ENCODE measurements at regions of chr18 and their contacts with region 1.

Region 1: DNA sequence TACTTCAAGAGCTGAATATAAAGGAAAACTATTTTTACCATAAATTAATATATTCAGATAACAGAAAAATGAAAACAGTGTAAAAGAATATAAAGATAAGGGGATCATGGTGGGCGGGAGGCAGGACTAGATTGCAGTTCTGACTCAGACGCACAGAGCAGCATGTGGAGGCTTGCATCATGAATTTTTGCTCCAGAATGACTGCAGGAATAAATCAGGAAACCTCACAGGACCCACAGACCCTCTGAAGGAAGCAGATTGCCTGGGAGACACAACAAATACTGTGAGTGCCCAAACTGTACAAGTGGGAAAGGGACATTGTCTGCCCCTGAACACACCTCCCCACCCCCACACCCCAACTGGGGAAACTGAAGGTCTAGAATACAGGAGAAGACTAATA is 19.2 kb upstream of the SIGLEC15 start:
- DNase-seq: no peak
- ATAC-seq: no peak
- H3K4me3 Mint-ChIP-seq: no peak overlapping the region
- H3K27ac Mint-ChIP-seq: no peak overlapping the region
- H3K4me1 Mint-ChIP-seq: peaks cover 21% of the 10 kb centered on the region
- H3K27me3 Mint-ChIP-seq: no peaks in the 10 kb centered on the region
- CTCF ChIP-seq: no peak

Region 2: DNA sequence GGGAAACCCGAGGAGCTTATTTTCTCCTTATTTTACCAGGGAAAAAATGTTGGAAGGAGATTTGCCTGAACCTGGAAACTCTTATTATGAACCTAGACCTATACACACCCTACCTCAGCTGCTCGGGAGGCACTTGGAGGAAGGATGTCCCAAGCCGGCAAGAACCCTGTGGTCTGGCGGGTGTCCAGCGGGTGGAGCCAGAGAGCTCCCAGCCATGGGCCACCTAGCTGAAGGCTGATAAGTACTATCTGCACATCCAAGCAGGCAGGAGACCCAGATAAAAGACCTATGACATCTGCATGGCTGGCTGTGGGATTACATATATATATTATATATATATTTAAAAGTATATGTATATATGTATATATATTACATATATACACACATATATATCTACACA is 83.3 kb before region 1 on chr18:
- CTCF ChIA-PET with region 1: interaction called, 16 read pairs
- POLR2A ChIA-PET with region 1: no interaction called
- DNase-seq: peak; percentile 91
- ATAC-seq: peak; percentile 99
- H3K4me3 Mint-ChIP-seq: no peak overlapping the region
- H3K27ac Mint-ChIP-seq: no peak overlapping the region
- H3K4me1 Mint-ChIP-seq: peaks cover 20% of the 10 kb centered on the region
- H3K27me3 Mint-ChIP-seq: no peaks in the 10 kb centered on the region; the same call in 1 of the 2 replicates
- CTCF ChIP-seq: peak; percentile 71

Region 3: DNA sequence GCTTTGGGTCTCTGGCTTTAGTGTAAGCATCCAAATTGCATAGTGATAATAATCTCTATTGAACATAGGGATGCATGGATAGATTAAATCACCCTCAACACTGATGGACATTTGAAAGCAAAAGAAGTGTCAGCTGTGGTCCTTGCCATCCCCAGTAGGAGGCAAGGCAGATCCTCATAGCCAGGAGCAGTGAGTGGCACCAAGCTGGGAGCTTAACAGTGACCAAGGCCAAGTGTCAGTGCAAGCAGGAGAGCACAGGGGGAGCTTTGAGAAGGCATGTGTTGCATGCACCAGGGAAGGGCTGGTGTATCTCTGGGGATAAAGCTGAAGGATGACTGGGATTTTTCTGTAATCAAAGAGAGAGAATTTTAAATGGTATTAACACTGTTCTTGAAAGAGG is 67.6 kb before region 1 on chr18:
- CTCF ChIA-PET with region 1: interaction called, 22 read pairs
- POLR2A ChIA-PET with region 1: no interaction called
- DNase-seq: peak; percentile 21
- ATAC-seq: peak; percentile 82
- H3K4me3 Mint-ChIP-seq: no peak overlapping the region
- H3K27ac Mint-ChIP-seq: no peak overlapping the region
- H3K4me1 Mint-ChIP-seq: peaks cover 39% of the 10 kb centered on the region
- H3K27me3 Mint-ChIP-seq: no peaks in the 10 kb centered on the region
- CTCF ChIP-seq: no peak

Region 4: DNA sequence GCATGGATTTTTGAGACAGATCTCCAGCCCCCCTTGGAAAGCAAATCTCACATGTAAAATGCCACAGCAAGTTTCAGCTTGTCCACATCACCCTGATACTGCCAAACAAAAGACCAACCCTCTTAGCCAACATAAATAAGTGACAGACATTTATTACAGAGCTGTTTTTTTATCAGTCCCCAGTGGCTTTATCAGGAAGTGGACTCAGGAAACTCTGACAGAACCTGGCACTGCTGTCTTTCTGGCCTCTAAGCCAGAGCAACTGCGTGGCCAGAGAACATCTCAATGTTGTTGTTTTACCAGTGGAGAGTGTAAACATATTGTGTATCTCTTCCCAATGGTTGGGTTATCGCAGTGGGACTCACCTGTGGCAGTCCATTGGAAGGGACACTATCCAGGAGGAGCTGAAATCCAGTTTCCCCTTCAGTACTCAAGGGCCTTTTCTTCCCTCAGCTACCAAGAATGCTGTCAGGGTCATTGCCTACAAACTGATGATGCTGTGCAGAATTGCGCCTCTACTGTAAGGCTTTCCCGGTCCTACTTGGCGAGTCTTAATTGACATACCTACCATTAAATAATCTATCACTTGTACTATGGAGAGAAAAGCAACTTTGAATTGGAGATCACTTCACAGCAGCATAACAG is 60.3 kb before region 1 on chr18:
- CTCF ChIA-PET with region 1: interaction called, 10 read pairs
- POLR2A ChIA-PET with region 1: no interaction called
- DNase-seq: no peak
- ATAC-seq: no peak
- H3K4me3 Mint-ChIP-seq: no peak overlapping the region
- H3K27ac Mint-ChIP-seq: no peak overlapping the region
- H3K4me1 Mint-ChIP-seq: peaks cover 20% of the 10 kb centered on the region
- H3K27me3 Mint-ChIP-seq: no peaks in the 10 kb centered on the region; the same call in 1 of the 2 replicates
- CTCF ChIP-seq: no peak

Region 5: GRCh38 chr18:45775241-45775676 is 31.0 kb before region 1 on chr18:
- CTCF ChIA-PET with region 1: interaction called, 10 read pairs
- POLR2A ChIA-PET with region 1: no interaction called
- DNase-seq: peak; percentile 62
- ATAC-seq: peak; percentile 92
- H3K4me3 Mint-ChIP-seq: peak overlapping the region; percentile 75
- H3K27ac Mint-ChIP-seq: peak overlapping the region; percentile 41; the same call in 1 of the 2 replicates
- H3K4me1 Mint-ChIP-seq: peaks cover 4% of the 10 kb centered on the region
- H3K27me3 Mint-ChIP-seq: peaks cover 45% of the 10 kb centered on the region
- CTCF ChIP-seq: no peak

Region 6: DNA sequence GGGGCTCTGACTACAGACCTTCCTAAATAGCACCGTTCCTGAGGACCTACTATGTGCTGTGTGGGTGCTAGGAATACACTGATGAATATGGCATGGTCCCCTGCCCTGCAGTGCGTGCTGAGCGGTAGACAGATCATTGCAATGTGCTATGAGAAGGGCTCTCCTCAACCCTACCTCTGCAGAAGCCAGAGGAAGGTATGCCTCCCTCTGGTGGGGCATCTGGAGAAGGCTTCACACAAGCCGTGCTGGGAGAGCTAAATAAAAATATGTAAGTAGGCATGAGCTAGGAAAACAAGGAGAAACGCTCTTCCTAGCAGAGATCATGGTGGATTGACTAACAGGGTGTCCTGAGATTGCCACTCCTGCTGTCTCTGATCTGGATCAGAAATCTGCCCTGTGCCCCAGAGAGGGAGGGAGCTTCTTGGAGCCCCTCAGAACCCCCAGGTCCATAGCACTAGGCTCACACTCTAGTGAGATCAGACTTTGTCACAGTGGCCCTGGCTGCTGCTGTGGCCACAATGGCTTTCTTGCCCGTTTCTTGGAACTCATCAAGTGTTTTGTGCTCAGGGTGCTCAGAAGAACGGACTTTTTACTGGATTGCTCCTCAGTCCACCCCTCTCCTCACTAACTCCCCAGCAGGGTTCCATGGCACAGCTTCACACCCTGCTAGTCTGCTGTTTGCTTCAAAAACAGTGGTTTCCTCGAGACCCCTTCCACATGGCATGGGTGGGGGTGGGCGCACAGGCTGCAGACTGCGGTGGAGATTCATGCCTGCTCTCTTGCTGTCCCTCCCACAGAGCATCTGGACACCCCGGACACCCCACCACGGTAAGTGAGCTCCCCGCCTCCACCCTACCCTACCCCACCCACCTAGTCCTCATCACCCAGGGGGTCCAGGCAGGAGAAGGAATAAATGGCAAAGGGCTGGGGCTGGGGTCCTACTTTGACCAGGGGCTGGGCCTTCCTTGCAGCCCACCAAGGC is 33.5 kb after region 1 on chr18:
- CTCF ChIA-PET with region 1: interaction called, 13 read pairs
- POLR2A ChIA-PET with region 1: no interaction called
- DNase-seq: peak; percentile 56
- ATAC-seq: peak; percentile 65
- H3K4me3 Mint-ChIP-seq: no peak overlapping the region
- H3K27ac Mint-ChIP-seq: no peak overlapping the region
- H3K4me1 Mint-ChIP-seq: peaks cover 22% of the 10 kb centered on the region
- H3K27me3 Mint-ChIP-seq: peaks cover 44% of the 10 kb centered on the region
- CTCF ChIP-seq: peak; percentile 40; the same call in 1 of the 2 replicates

Region 7: GRCh38 chr18:46134920-46135675 is 328.9 kb after region 1 on chr18:
- CTCF ChIA-PET with region 1: no interaction called
- POLR2A ChIA-PET with region 1: no interaction called
- DNase-seq: no peak
- ATAC-seq: peak; percentile 74
- H3K4me3 Mint-ChIP-seq: no peak overlapping the region
- H3K27ac Mint-ChIP-seq: peak overlapping the region; percentile 24
- H3K4me1 Mint-ChIP-seq: peaks cover 20% of the 10 kb centered on the region
- H3K27me3 Mint-ChIP-seq: no peaks in the 10 kb centered on the region
- CTCF ChIP-seq: no peak

Measured in WTC11 (cell line).